GM10248 (cell line): ENCODE measurements at regions of chr19 and their contacts with region 1.

Region 1: GRCh38 chr19:1189419-1189818 is 15.4 kb upstream of the SBNO2 start:
- DNase-seq: no peak
- CTCF ChIP-seq: no peak

Region 2: GRCh38 chr19:1119475-1120217 is 69.8 kb before region 1 on chr19:
- CTCF ChIA-PET with region 1: no interaction called
- POLR2A ChIA-PET with region 1: no interaction called
- DNase-seq: no peak
- CTCF ChIP-seq: no peak

Region 3: DNA sequence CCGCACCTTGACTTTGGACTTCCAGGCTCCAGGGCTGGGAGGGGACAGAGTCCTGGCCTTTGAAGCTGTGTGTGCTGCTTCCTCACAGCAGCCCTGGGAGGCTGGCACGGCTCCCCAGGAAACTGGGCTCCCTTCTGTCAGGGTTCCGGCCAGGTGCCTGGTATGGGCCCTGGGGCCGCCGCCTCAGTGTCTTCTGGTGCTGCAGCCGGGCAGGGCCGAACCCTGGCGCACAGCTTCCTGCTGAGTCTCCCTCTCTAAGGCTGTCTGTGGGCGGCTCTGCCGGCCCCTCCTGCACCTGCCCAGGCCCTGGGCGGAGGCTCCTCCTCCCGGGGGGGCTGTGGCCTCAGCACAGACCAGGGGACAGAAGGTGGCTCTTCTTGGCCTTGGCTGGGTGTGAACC is 53.2 kb before region 1 on chr19:
- CTCF ChIA-PET with region 1: no interaction called
- POLR2A ChIA-PET with region 1: no interaction called
- DNase-seq: peak; percentile 65
- CTCF ChIP-seq: no peak

Region 4: DNA sequence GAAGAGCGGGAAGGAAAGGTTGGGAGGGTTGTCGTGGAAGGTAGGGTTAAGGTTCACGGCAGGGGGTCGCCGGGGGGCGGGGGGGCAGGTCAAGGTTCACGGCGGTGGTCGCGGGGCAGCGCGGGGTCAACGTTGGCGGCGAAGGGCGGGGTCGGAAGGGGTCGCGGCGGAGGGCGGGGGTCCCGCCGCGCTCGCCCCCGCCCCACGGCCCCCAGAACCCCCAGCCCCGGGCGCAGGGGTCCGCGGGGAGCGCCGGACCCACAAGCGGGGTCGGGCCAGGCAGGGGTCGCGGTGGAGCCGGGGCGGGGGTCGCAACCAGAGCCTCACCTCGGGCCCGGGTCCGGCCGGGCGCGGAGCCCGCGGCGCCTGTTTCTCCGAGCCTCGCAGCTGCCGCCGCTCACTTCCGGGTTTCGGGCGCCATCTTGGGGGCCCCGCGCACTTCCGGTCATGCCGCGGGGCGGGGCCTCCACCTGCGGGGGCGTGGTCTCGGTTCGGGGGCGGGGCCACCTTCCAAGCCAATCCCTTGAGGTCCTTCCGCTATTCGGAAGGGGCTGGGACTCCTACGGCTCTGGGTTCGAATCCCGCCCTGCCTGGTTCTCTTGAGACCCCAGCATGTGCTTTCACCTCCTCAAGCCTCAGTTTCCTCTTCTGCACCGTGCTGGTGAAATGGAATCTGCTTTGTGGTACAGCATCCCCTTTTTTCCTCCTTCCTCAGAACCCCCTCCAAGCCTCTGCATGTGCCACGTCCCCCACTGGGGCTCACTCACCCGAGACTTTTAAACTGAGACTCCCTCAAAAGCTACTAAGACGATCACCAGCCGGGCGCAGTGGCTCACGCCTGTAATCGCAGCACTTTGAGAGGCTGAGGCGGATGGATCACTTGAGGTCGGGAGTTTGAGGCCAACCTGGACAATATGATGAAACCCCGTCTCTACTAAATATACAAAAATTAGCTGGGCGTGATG is 15.3 kb before region 1 on chr19 and contains the start of gene SBNO2:
- CTCF ChIA-PET with region 1: interaction called, 13 read pairs
- POLR2A ChIA-PET with region 1: no interaction called
- DNase-seq: peak; percentile 100
- CTCF ChIP-seq: no peak

Region 5: DNA sequence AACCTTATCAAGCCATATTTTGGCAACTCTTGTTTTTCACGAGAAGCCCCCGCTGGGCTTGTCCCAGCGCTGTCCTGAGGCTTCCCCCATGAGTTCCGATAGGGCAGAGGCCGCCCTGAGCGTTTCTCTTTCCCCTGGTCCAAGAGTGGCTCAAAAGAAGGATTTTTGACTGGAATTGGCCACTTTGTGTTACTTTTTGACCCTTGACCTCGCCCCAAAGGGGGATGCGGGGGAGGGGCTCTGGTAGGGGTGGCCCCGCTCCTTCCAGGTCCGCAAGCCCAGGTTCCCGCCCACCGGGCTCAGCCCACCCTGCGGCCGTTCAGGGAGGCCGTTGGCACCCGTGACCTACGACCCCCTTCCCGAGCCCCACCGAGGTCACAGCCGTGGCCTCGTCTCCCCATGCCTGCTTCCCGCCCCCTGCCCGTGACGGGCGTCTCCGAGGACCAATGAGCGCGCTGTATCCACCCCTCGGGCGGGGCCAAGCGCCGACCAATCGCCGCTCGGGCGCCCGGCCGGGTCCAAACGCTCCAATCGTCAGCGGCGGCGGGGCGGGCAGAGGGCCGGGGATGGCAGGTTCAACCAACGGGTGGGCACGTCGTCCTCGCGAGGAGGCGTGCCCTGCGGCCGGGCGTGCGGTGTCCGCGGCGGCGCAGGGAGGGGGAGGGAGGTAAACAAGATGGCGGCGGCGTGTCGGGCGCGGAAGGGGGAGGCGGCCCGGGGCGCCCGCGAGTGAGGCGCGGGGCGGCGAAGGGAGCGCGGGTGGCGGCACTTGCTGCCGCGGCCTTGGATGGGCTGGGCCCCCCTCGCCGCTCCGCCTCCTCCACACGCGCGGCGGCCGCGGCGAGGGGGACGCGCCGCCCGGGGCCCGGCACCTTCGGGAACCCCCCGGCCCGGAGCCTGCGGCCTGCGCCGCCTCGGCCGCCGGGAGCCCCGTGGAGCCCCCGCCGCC is 16.0 kb after region 1 on chr19 and contains the start of gene STK11:
- CTCF ChIA-PET with region 1: interaction called, 12 read pairs
- POLR2A ChIA-PET with region 1: no interaction called
- DNase-seq: peak; percentile 100
- CTCF ChIP-seq: no peak

Region 6: DNA sequence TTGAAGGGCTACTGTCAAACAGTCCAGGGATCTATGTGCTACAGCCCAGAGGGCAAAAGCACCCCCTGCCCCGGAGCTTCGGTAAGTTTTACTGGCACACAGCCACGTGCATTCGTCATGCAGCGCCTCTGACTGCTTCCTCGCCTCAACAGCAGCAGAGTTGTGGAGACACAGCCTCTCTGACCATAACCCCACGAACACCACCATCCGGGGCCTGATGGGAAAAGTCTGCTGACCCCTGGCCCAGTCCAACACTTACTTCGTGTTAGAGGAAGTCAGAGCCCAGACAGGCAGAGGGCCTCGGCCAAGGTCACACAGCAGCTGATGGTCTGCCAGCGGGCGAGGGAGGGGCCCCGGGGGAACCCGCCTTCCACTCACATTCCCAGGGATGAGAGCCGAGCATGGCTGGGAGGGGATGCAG is 43.2 kb after region 1 on chr19:
- CTCF ChIA-PET with region 1: no interaction called
- POLR2A ChIA-PET with region 1: no interaction called
- DNase-seq: no peak
- CTCF ChIP-seq: no peak